ENCODE measurements at regions of chr3 and their contacts with region 1.

Region 1: DNA sequence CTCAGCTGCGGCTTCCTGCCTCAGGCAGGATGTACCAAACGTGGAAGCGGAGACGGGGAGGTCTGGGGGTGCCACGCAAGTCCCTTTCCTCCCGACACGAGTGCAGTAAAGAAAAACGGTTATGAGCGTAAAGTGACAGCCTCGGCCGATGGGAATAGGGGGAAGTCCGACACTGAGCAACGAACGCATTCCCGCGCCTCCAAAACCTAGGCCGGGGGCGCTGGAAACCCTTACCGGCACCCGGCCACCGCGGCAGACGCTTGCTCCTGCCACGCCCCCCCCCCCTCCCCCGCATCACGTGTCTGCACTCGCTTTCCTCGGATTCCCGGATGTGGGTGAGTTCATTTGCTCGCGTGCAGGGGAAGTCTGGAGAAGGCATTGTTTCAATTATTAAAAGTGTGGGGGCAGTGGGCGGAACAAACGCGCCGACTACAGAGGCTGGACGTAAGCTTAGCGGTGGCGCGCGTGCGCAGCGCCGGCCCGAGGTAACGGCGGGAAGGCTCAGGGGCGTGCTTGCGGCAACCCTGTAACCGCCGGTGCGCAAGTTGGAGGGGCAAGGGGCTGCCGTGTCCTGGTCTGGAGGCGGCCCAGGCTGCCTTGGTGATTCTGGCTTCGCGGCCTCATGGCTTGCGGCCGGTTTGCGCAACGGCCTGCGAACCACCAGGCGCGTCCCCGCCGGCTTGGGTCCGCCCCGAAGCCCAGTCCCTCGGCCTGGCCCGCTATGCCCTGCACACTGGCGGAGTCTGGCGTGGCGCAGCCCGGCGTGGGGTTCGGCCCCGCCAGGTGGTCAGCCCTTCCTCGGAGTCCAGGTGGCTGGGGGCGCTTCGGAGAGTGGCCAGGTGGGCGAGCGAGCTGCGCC is at the starts of genes ANAPC13 and CEP63:
- DNase-seq: peak; percentile 87 to 99 (median 93)
- ATAC-seq: peak; percentile 80
- H3K4me3 ChIP-seq: peak within 1 kb of the TSS; percentile 88 to 96
- H3K4me3 Mint-ChIP-seq: peak within 1 kb of the TSS; percentile 100
- H3K27ac ChIP-seq: peak within 1 kb of the TSS; percentile 88 to 96
- H3K27ac Mint-ChIP-seq: peak within 1 kb of the TSS; percentile 99
- H3K4me1 ChIP-seq: peaks cover 36% of the 10 kb centered on the region
- H3K4me1 Mint-ChIP-seq: peaks cover 60% of the 10 kb centered on the region
- H3K27me3 ChIP-seq: no peaks in the 10 kb centered on the region
- H3K27me3 Mint-ChIP-seq: no peaks in the 10 kb centered on the region
- CTCF ChIP-seq: no peak
- total RNA-seq, gene ANAPC13: 15.5 to 15.9 TPM
- total RNA-seq, gene CEP63: 14.6 to 16.9 TPM

Region 2: DNA sequence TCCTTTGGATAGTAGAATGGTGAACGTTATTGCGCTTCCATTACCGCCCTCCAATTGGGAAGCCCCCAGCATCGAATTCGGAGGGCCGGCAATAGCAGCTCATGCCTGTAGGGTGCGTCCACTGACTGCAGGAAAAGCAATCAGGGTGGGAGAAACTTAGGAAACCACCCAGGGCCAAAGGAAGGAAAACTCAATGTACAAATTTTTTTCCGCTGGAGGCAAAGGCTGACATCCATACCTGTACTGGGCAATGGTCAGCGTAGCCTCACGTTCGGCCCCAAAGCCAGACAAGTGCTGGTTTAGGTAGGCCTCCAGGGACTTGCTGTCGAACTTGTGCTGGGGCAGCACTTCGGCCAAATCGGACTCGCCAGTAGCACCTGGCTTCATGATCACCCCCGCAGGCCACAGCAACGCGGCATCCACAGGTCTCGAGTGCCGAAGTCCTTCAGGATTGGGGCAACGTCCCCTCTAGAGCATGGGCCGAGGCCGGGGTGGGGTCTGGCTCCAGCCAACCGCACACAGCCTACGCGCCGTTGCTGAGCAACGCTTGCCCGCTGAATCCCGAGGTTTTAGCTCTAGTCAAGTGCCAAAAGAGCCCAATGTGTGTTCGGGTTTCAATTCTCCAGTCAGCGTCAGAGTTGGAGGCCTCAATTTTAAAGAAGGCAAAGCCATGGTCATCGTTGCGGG is 1826.4 kb before region 1 on chr3 and contains the start of gene ACAD11:
- CTCF ChIA-PET with region 1: no interaction called
- POLR2A ChIA-PET with region 1: no interaction called
- intact Hi-C with region 1: loop called in 1 of 2 experiments (anchors 10 kb)
- DNase-seq: peak in 8 of 9 experiments; percentile 2 to 68 (median 29)
- ATAC-seq: peak; percentile 26
- H3K4me3 ChIP-seq: peak within 1 kb of the TSS; percentile 80 to 94
- H3K4me3 Mint-ChIP-seq: peak within 1 kb of the TSS; percentile 96
- H3K27ac ChIP-seq: peak within 1 kb of the TSS; percentile 83 to 89
- H3K27ac Mint-ChIP-seq: peak within 1 kb of the TSS; percentile 98
- H3K4me1 ChIP-seq: peaks cover 35% of the 10 kb centered on the region
- H3K4me1 Mint-ChIP-seq: peaks cover 69% of the 10 kb centered on the region
- H3K27me3 ChIP-seq: no peaks in the 10 kb centered on the region
- H3K27me3 Mint-ChIP-seq: no peaks in the 10 kb centered on the region
- CTCF ChIP-seq: peak; percentile 8
- total RNA-seq, gene ACAD11: 30.0 to 31.6 TPM

Region 3: GRCh38 chr3:133573054-133573628 is 912.8 kb before region 1 on chr3:
- CTCF ChIA-PET with region 1: no interaction called
- POLR2A ChIA-PET with region 1: interaction called, 4 read pairs
- intact Hi-C with region 1: loop called in 1 of 2 experiments (anchors 2 kb)
- DNase-seq: peak; percentile 100
- ATAC-seq: peak; percentile 83
- H3K4me3 ChIP-seq: peak overlapping the region; percentile 45 to 58
- H3K4me3 Mint-ChIP-seq: peak overlapping the region; percentile 89
- H3K27ac ChIP-seq: peak overlapping the region; percentile 76 to 93
- H3K27ac Mint-ChIP-seq: peak overlapping the region; percentile 99
- H3K4me1 ChIP-seq: peaks cover 38% of the 10 kb centered on the region
- H3K4me1 Mint-ChIP-seq: peaks cover 58% of the 10 kb centered on the region
- H3K27me3 ChIP-seq: no peaks in the 10 kb centered on the region
- H3K27me3 Mint-ChIP-seq: no peaks in the 10 kb centered on the region
- CTCF ChIP-seq: no peak

Region 4: DNA sequence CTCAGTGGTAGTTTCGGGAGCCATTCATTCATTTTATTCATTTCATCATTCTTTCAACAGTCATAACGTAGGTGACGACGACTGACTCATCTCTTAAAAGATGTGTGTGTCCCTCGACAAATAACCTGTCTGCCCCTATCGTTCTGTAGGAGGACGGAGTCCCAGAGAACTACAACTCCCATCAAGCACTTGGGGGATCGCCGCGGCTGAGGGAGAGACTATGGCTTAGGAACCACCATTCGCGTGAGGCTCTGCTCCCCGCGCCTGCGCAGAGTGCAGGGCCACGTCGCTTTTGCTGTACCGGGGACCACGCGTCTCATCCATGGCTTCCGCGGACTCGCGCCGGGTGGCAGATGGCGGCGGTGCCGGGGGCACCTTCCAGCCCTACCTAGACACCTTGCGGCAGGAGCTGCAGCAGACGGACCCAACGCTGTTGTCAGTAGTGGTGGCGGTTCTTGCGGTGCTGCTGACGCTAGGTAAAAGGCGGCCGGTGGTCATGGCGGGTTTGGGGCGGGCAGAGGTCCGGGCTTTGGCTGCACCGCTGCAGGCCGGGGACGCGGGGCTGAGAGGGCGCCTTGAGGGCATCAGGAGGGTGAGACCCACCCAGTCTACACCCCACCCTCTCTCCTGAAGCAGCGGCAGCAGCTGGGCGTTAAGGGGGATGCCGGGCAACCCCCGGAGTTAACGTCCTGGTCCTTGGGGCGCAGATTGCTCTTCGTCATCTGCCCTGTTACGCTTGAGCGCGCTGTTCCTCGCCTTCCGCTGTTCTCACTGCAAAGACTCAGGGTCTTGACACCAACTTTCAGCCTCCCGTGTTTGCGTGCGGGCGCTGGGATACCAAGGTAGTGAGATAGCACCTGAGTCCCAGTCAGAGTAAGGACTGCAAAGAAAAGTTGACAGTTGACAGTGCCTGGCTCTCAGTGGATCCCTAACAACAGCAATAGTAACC is 680.1 kb before region 1 on chr3 and contains the start of gene SRPRB:
- CTCF ChIA-PET with region 1: interaction called, 3 read pairs
- POLR2A ChIA-PET with region 1: no interaction called
- intact Hi-C with region 1: loop called (anchors 5 kb)
- DNase-seq: peak; percentile 92 to 98 (median 95)
- ATAC-seq: peak; percentile 94
- H3K4me3 ChIP-seq: peak within 1 kb of the TSS; percentile 81 to 91
- H3K4me3 Mint-ChIP-seq: peak within 1 kb of the TSS; percentile 97
- H3K27ac ChIP-seq: peak within 1 kb of the TSS; percentile 77 to 81
- H3K27ac Mint-ChIP-seq: peak within 1 kb of the TSS; percentile 96
- H3K4me1 ChIP-seq: peaks cover 18% of the 10 kb centered on the region
- H3K4me1 Mint-ChIP-seq: peaks cover 37% of the 10 kb centered on the region
- H3K27me3 ChIP-seq: no peaks in the 10 kb centered on the region
- H3K27me3 Mint-ChIP-seq: peaks cover 4% of the 10 kb centered on the region
- CTCF ChIP-seq: no peak
- total RNA-seq, gene SRPRB: 25.7 to 30.1 TPM

Region 5: GRCh38 chr3:134250717-134251220 is 235.2 kb before region 1 on chr3 and contains the start of gene RYK:
- CTCF ChIA-PET with region 1: no interaction called
- POLR2A ChIA-PET with region 1: interaction called, 5 read pairs
- intact Hi-C with region 1: loop called (anchors 1 to 2 kb)
- DNase-seq: peak; percentile 50 to 89 (median 73)
- ATAC-seq: peak; percentile 74
- H3K4me3 ChIP-seq: peak within 1 kb of the TSS; percentile 76 to 86
- H3K4me3 Mint-ChIP-seq: peak within 1 kb of the TSS; percentile 94
- H3K27ac ChIP-seq: peak within 1 kb of the TSS; percentile 65 to 68
- H3K27ac Mint-ChIP-seq: peak within 1 kb of the TSS; percentile 94
- H3K4me1 ChIP-seq: peaks cover 17% of the 10 kb centered on the region
- H3K4me1 Mint-ChIP-seq: peaks cover 44% of the 10 kb centered on the region
- H3K27me3 ChIP-seq: no peaks in the 10 kb centered on the region
- H3K27me3 Mint-ChIP-seq: no peaks in the 10 kb centered on the region
- CTCF ChIP-seq: no peak
- total RNA-seq, gene RYK: 63.6 to 64.7 TPM

Region 6: DNA sequence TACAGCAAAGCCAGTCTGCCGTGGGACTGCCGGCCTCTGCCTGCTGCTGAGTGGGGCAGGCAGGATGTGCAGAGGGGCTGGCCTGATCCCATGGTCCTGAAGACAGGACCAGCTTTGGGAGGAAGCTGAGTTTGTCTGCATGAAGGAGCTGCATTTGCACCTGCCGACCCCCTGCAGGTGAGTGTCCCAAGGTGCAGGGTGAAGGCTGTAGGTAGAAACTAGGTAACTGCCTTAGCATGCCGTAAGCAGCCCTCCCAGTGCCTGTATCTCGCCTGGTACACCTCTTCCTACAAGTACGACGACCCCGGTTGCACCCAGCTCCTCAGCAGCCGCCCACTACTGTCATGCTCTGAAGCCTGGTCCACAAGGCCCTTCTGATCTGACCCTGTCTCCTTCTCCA is 146.6 kb before region 1 on chr3:
- CTCF ChIA-PET with region 1: no interaction called
- POLR2A ChIA-PET with region 1: no interaction called
- intact Hi-C with region 1: no loop called
- DNase-seq: no peak
- ATAC-seq: no peak
- H3K4me3 ChIP-seq: no peak overlapping the region
- H3K4me3 Mint-ChIP-seq: no peak overlapping the region
- H3K27ac ChIP-seq: no peak overlapping the region
- H3K27ac Mint-ChIP-seq: no peak overlapping the region
- H3K4me1 ChIP-seq: no peaks in the 10 kb centered on the region
- H3K4me1 Mint-ChIP-seq: no peaks in the 10 kb centered on the region
- H3K27me3 ChIP-seq: no peaks in the 10 kb centered on the region
- H3K27me3 Mint-ChIP-seq: no peaks in the 10 kb centered on the region
- CTCF ChIP-seq: no peak

Region 7: GRCh38 chr3:134511500-134511899 is 25.6 kb after region 1 on chr3:
- CTCF ChIA-PET with region 1: no interaction called
- POLR2A ChIA-PET with region 1: no interaction called
- intact Hi-C with region 1: no loop called
- DNase-seq: no peak
- ATAC-seq: no peak
- H3K4me3 ChIP-seq: no peak overlapping the region
- H3K4me3 Mint-ChIP-seq: no peak overlapping the region
- H3K27ac ChIP-seq: no peak overlapping the region
- H3K27ac Mint-ChIP-seq: no peak overlapping the region
- H3K4me1 ChIP-seq: no peaks in the 10 kb centered on the region
- H3K4me1 Mint-ChIP-seq: peaks cover 13% of the 10 kb centered on the region
- H3K27me3 ChIP-seq: no peaks in the 10 kb centered on the region
- H3K27me3 Mint-ChIP-seq: no peaks in the 10 kb centered on the region
- CTCF ChIP-seq: no peak

Region 8: DNA sequence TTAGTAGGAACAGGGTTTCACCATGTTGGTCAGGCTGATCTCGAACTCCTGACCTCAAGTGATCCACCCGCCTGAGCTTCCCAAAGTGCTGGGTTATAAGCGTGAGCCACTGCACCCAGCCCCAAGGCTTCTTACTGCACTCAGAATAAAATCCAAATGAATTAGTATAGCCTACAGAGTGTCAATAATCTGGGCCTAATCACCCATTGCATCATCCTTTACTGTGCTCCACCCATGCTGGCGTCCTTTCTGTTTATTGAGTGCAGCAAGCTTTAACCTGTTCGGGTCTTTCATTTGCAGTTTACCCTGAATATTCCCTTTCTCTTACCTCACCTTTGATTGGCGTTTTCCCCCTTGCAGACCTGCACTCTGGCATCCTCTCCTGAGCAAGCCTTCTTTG is 77.7 kb after region 1 on chr3:
- CTCF ChIA-PET with region 1: no interaction called
- POLR2A ChIA-PET with region 1: no interaction called
- intact Hi-C with region 1: no loop called
- DNase-seq: no peak
- ATAC-seq: no peak
- H3K4me3 ChIP-seq: no peak overlapping the region
- H3K4me3 Mint-ChIP-seq: no peak overlapping the region
- H3K27ac ChIP-seq: no peak overlapping the region
- H3K27ac Mint-ChIP-seq: no peak overlapping the region
- H3K4me1 ChIP-seq: no peaks in the 10 kb centered on the region
- H3K4me1 Mint-ChIP-seq: no peaks in the 10 kb centered on the region
- H3K27me3 ChIP-seq: no peaks in the 10 kb centered on the region
- H3K27me3 Mint-ChIP-seq: no peaks in the 10 kb centered on the region
- CTCF ChIP-seq: no peak

Region 9: DNA sequence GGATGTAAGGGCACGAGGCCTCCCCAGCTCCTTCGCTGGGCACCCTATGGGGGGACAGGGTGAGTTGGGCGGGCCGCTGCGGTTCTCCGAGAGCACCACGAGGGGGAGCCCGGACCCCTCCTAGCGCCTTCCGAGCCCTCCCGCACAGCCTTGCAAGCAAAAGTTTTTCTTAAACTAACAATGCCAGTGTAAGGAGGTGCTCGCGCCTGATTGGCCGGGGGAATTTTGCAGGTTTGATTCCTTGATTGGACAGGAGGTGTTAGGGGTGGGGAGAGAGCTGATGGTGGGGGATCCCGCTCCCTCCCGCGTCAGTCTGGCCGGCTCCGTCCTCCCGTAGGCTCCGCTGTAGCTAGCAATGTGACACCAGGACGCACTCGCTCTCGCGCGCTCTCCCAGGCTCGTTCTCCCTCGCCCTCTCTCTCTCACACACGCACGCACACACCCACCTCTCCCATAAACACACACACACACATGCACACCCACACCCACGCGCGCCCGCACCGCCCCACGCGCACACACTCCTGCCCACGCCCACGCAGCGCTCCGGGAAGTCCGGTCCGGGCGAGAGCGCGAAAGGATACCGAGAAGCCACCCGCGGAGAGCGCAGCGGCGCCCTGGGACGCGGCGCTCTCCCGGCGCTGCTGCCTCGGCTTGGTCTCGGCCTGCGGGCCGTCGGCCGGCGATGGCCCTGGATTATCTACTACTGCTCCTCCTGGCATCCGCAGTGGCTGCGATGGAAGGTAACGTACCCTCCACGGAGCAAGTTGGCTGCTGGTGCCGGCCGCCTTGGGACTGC is 309.2 kb after region 1 on chr3 and contains the start of gene EPHB1:
- CTCF ChIA-PET with region 1: no interaction called
- POLR2A ChIA-PET with region 1: no interaction called
- intact Hi-C with region 1: no loop called
- DNase-seq: peak; percentile 4 to 55 (median 35)
- ATAC-seq: peak; percentile 52
- H3K4me3 ChIP-seq: peak within 1 kb of the TSS; percentile 29 to 30
- H3K4me3 Mint-ChIP-seq: peak within 1 kb of the TSS; percentile 77
- H3K27ac ChIP-seq: no peak within 1 kb of the TSS
- H3K27ac Mint-ChIP-seq: no peak within 1 kb of the TSS
- H3K4me1 ChIP-seq: no peaks in the 10 kb centered on the region
- H3K4me1 Mint-ChIP-seq: peaks cover 7% of the 10 kb centered on the region
- H3K27me3 ChIP-seq: peaks cover 3 to 9% of the 10 kb centered on the region in 2 experiments
- H3K27me3 Mint-ChIP-seq: peaks cover 57% of the 10 kb centered on the region
- CTCF ChIP-seq: peak; percentile 43
- total RNA-seq, gene EPHB1: not detected

Measured in CD8-positive, alpha-beta T cell (primary cell).